Caco-2 (cell line): ENCODE measurements at regions of chr9 and their contacts with region 1.

Region 1: GRCh38 chr9:120730661-120731514 is 16.6 kb upstream of the MEGF9 start:
- DNase-seq: peak; percentile 49 to 79
- H3K4me3 ChIP-seq: no peak overlapping the region
- H3K4me3 Mint-ChIP-seq: no peak overlapping the region
- H3K27ac Mint-ChIP-seq: no peak overlapping the region
- H3K4me1 ChIP-seq: peaks cover 15% of the 10 kb centered on the region
- H3K4me1 Mint-ChIP-seq: no peaks in the 10 kb centered on the region
- H3K27me3 ChIP-seq: no peaks in the 10 kb centered on the region
- H3K27me3 Mint-ChIP-seq: no peaks in the 10 kb centered on the region
- CTCF ChIP-seq: no peak

Region 2: GRCh38 chr9:120676767-120677402 is 54.0 kb before region 1 on chr9:
- CTCF ChIA-PET with region 1: no interaction called
- POLR2A ChIA-PET with region 1: no interaction called
- intact Hi-C with region 1: no loop called
- DNase-seq: no peak
- H3K4me3 ChIP-seq: no peak overlapping the region
- H3K4me3 Mint-ChIP-seq: no peak overlapping the region
- H3K27ac Mint-ChIP-seq: no peak overlapping the region
- H3K4me1 ChIP-seq: no peaks in the 10 kb centered on the region
- H3K4me1 Mint-ChIP-seq: no peaks in the 10 kb centered on the region
- H3K27me3 ChIP-seq: no peaks in the 10 kb centered on the region
- H3K27me3 Mint-ChIP-seq: no peaks in the 10 kb centered on the region
- CTCF ChIP-seq: no peak

Region 3: DNA sequence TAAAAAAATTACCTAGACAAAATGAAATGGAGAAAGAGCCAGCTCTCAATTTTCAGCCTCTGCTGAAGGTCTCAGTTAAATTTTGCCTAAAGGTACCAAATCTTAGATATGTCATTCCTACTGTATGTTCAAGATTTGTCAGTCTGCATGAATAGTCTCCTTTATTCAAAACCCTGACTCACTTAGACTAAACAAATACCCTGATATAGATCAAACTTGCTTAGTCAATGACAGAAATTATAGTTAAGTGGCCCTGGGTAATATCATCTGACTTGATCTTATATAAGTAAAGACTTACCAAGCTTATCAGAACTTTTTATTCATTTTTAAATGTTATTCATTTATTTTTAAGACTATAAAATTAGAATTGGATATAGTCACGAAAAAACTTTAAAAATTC is 28.8 kb before region 1 on chr9:
- CTCF ChIA-PET with region 1: no interaction called
- POLR2A ChIA-PET with region 1: no interaction called
- intact Hi-C with region 1: no loop called
- DNase-seq: no peak
- H3K4me3 ChIP-seq: no peak overlapping the region
- H3K4me3 Mint-ChIP-seq: no peak overlapping the region
- H3K27ac Mint-ChIP-seq: no peak overlapping the region
- H3K4me1 ChIP-seq: 0 out of 2 replicates have a peak, but pooled peaks cover 5% of the 10 kb centered on the region
- H3K4me1 Mint-ChIP-seq: no peaks in the 10 kb centered on the region
- H3K27me3 ChIP-seq: no peaks in the 10 kb centered on the region
- H3K27me3 Mint-ChIP-seq: no peaks in the 10 kb centered on the region
- CTCF ChIP-seq: no peak

Region 4: GRCh38 chr9:120714088-120714845 is 16.6 kb before region 1 on chr9 and contains the start of gene MEGF9:
- CTCF ChIA-PET with region 1: interaction called, 4 read pairs
- POLR2A ChIA-PET with region 1: interaction called, 6 read pairs
- intact Hi-C with region 1: loop called (anchors 2 kb)
- DNase-seq: peak; percentile 97 to 98
- H3K4me3 ChIP-seq: peak within 1 kb of the TSS; percentile 67
- H3K4me3 Mint-ChIP-seq: peak within 1 kb of the TSS; percentile 85
- H3K27ac Mint-ChIP-seq: peak within 1 kb of the TSS; percentile 61
- H3K4me1 ChIP-seq: peaks cover 19% of the 10 kb centered on the region
- H3K4me1 Mint-ChIP-seq: no peaks in the 10 kb centered on the region
- H3K27me3 ChIP-seq: no peaks in the 10 kb centered on the region
- H3K27me3 Mint-ChIP-seq: no peaks in the 10 kb centered on the region
- CTCF ChIP-seq: no peak
- total RNA-seq, gene MEGF9: 2.8 and 2.9 TPM in 2 replicates